Motor neuron (in vitro differentiated cells): ENCODE measurements at regions of chr21 and their contacts with region 1.

Region 1: GRCh38 chr21:29342363-29342957 is 43.7 kb downstream of the BACH1 start:
- ATAC-seq: peak in 4 of 8 experiments; percentile 68 to 96 (median 80)
- H3K4me3 ChIP-seq: no peak overlapping the region
- H3K27ac ChIP-seq: no peak overlapping the region
- H3K4me1 ChIP-seq: no peaks in the 10 kb centered on the region

Region 2: DNA sequence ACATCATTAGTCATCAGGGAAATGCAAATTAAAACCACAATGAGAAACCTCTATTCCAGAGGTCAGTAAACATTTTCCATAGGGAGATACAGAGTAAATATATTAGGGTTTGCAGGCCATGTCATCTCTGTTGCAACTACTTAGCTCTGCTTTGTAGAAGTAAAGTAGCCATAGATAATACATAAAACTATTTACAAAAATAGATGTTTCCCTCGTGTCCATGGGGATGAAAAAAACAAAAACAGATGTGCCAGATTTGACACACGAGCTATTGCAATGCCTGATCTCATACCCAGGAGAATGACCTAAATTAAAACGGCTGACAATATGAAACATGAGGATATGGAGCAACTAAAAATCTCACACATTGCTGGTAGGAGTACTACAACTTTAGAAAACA is 367.1 kb before region 1 on chr21:
- in situ Hi-C with region 1: no loop called
- ATAC-seq: peak in 3 of 8 experiments; percentile 78 to 93 (median 92)
- H3K4me3 ChIP-seq: no peak overlapping the region
- H3K27ac ChIP-seq: no peak overlapping the region
- H3K4me1 ChIP-seq: no peaks in the 10 kb centered on the region

Region 3: GRCh38 chr21:29078869-29079767 is 263.3 kb before region 1 on chr21:
- in situ Hi-C with region 1: loop called in 1 of 9 experiments (anchors 25 kb)
- ATAC-seq: peak in 3 of 8 experiments; percentile 35 to 72 (median 47)
- H3K4me3 ChIP-seq: no peak overlapping the region
- H3K27ac ChIP-seq: no peak overlapping the region
- H3K4me1 ChIP-seq: peaks cover 1 to 7% of the 10 kb centered on the region in 2 donors